Naive thymus-derived CD4-positive, alpha-beta T cell (primary cell): ENCODE measurements at regions of chr6 and their contacts with region 1.

Region 1: GRCh38 chr6:30742316-30743098 is at the start of gene FLOT1:
- DNase-seq: peak in 7 of 9 donors; percentile 47 to 98 (median 56)
- ATAC-seq: peak; percentile 84
- H3K4me3 ChIP-seq: peak within 1 kb of the TSS; percentile 85
- H3K4me3 Mint-ChIP-seq: peak within 1 kb of the TSS; percentile 84 to 100 (median 93)
- H3K27ac ChIP-seq: peak within 1 kb of the TSS; percentile 83
- H3K27ac Mint-ChIP-seq: peak within 1 kb of the TSS; percentile 84 to 98 (median 93)
- H3K4me1 ChIP-seq: peaks cover 28 to 35% of the 10 kb centered on the region in 2 donors
- H3K4me1 Mint-ChIP-seq: peaks cover 48 to 74% (median 61%) of the 10 kb centered on the region in 7 donors
- H3K27me3 ChIP-seq: no peaks in the 10 kb centered on the region
- H3K27me3 Mint-ChIP-seq: no peaks in the 10 kb centered on the region
- total RNA-seq, gene FLOT1: 59.4 to 204 (median 81.3) TPM

Region 2: GRCh38 chr6:30678964-30679726 is 63.4 kb before region 1 on chr6:
- CTCF ChIA-PET with region 1: interaction called, 3 read pairs
- POLR2A ChIA-PET with region 1: interaction called, 45 read pairs
- intact Hi-C with region 1: loop called in 1 of 2 experiments (anchors 1 kb)
- DNase-seq: peak; percentile 86 to 97 (median 92)
- ATAC-seq: peak; percentile 65
- H3K4me3 ChIP-seq: peak overlapping the region; percentile 98
- H3K4me3 Mint-ChIP-seq: peak overlapping the region; percentile 90 to 100 (median 97)
- H3K27ac ChIP-seq: peak overlapping the region; percentile 95
- H3K27ac Mint-ChIP-seq: peak overlapping the region; percentile 85 to 99 (median 97)
- H3K4me1 ChIP-seq: peaks cover 5 to 24% of the 10 kb centered on the region in 2 donors
- H3K4me1 Mint-ChIP-seq: peaks cover 20 to 47% (median 38%) of the 10 kb centered on the region in 7 donors
- H3K27me3 ChIP-seq: no peaks in the 10 kb centered on the region
- H3K27me3 Mint-ChIP-seq: no peaks in the 10 kb centered on the region

Region 3: DNA sequence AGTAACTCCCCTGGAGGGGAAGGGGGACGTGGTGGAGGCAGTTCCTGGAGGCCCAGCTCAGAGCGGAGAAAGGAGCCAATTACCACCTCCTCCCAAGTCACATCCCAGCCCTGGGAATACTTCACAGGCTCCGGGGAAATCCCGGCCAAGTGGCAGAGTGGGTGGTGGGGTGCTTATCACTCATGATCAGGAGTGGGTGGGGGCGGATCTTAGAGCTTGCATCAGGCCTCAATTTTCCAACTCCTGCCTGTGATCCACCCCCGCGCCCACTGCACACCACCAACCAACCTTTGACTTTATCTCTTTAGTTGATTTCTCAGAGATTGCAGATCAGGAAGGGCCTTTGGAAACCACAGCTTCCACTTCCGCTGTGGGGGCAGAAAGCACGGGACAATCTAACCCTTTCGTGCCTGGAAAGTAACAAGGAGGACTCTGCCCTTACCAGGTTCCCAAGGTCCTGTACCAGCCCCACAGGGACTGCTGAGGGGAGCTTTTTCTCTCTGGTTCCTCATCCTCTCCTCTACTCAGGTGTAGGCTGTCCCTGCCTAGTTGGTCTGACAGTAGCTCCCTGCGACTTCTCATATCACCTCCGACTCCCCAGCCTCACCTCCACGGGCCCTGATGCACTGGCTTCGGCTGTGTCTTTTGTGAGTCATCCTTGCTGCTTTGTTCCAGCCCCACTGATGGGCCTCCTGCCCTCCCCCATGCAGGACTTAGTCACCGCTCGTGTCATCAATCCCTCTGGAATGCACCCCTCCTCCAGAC is 26.8 kb after region 1 on chr6:
- CTCF ChIA-PET with region 1: interaction called, 8 read pairs
- POLR2A ChIA-PET with region 1: interaction called, 15 read pairs
- intact Hi-C with region 1: loop called in 1 of 2 experiments (anchors 1 kb)
- DNase-seq: peak in 8 of 9 donors; percentile 47 to 85 (median 57)
- ATAC-seq: peak; percentile 81
- H3K4me3 ChIP-seq: peak overlapping the region; percentile 15
- H3K4me3 Mint-ChIP-seq: peak overlapping the region; percentile 55 to 84 (median 80)
- H3K27ac ChIP-seq: no peak overlapping the region
- H3K27ac Mint-ChIP-seq: peak overlapping the region; percentile 36 to 95 (median 86)
- H3K4me1 ChIP-seq: peaks cover 24 to 38% of the 10 kb centered on the region in 2 donors
- H3K4me1 Mint-ChIP-seq: peaks cover 38 to 90% (median 77%) of the 10 kb centered on the region in 7 donors
- H3K27me3 ChIP-seq: no peaks in the 10 kb centered on the region
- H3K27me3 Mint-ChIP-seq: no peaks in the 10 kb centered on the region

Region 4: GRCh38 chr6:30793521-30794194 is 51.2 kb after region 1 on chr6:
- CTCF ChIA-PET with region 1: interaction called, 8 read pairs
- POLR2A ChIA-PET with region 1: interaction called, 8 read pairs
- intact Hi-C with region 1: loop called in 1 of 2 experiments (anchors 1 kb)
- DNase-seq: peak in 7 of 9 donors; percentile 22 to 69 (median 57)
- ATAC-seq: peak; percentile 94
- H3K4me3 ChIP-seq: peak overlapping the region; percentile 12
- H3K4me3 Mint-ChIP-seq: peak overlapping the region; percentile 64 to 85 (median 78)
- H3K27ac ChIP-seq: peak overlapping the region; percentile 71
- H3K27ac Mint-ChIP-seq: peak overlapping the region; percentile 90 to 99 (median 96)
- H3K4me1 ChIP-seq: peaks cover 16 to 27% of the 10 kb centered on the region in 2 donors
- H3K4me1 Mint-ChIP-seq: peaks cover 29 to 72% (median 58%) of the 10 kb centered on the region in 7 donors
- H3K27me3 ChIP-seq: no peaks in the 10 kb centered on the region
- H3K27me3 Mint-ChIP-seq: no peaks in the 10 kb centered on the region

Region 5: GRCh38 chr6:30877419-30878371 is 135.2 kb after region 1 on chr6:
- CTCF ChIA-PET with region 1: interaction called, 4 read pairs
- POLR2A ChIA-PET with region 1: no interaction called
- intact Hi-C with region 1: loop called (anchors 1 kb)
- DNase-seq: peak; percentile 52 to 72 (median 63)
- ATAC-seq: peak; percentile 93
- H3K4me3 ChIP-seq: peak overlapping the region; percentile 40
- H3K4me3 Mint-ChIP-seq: peak overlapping the region; percentile 69 to 90 (median 86)
- H3K27ac ChIP-seq: peak overlapping the region; percentile 50
- H3K27ac Mint-ChIP-seq: peak overlapping the region; percentile 44 to 91 (median 84)
- H3K4me1 ChIP-seq: peaks cover 8 to 15% of the 10 kb centered on the region in 2 donors
- H3K4me1 Mint-ChIP-seq: peaks cover 10 to 31% (median 19%) of the 10 kb centered on the region in 7 donors
- H3K27me3 ChIP-seq: no peaks in the 10 kb centered on the region
- H3K27me3 Mint-ChIP-seq: peaks cover 0 to 7% (median 0%) of the 10 kb centered on the region in 5 donors

Region 6: DNA sequence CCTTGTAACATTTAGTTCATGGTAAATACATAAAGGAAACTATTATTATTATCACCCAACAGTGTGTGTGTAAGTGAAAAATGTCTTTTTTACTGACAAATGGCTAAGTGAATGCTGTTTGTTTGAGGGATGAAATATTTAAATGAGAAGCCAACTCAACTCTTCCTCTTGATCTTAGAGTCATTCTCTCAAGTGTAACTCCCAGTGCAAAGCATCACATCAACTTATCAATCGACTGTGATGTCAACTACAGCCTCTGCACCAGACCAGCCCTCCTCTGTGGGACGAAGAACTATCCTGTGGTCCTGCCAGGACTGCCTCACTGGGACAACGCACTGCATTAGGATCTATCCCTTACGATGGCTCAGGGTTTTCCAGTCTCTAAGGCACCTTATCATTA is 364.5 kb after region 1 on chr6:
- CTCF ChIA-PET with region 1: no interaction called
- POLR2A ChIA-PET with region 1: no interaction called
- intact Hi-C with region 1: no loop called
- DNase-seq: no peak
- ATAC-seq: no peak
- H3K4me3 ChIP-seq: no peak overlapping the region
- H3K4me3 Mint-ChIP-seq: no peak overlapping the region
- H3K27ac ChIP-seq: no peak overlapping the region
- H3K27ac Mint-ChIP-seq: no peak overlapping the region
- H3K4me1 ChIP-seq: no peaks in the 10 kb centered on the region
- H3K4me1 Mint-ChIP-seq: peaks cover 0 to 10% (median 4%) of the 10 kb centered on the region in 7 donors
- H3K27me3 ChIP-seq: no peaks in the 10 kb centered on the region
- H3K27me3 Mint-ChIP-seq: peaks cover 0 to 11% (median 8%) of the 10 kb centered on the region in 5 donors